Endothelial cell of umbilical vein (primary cell): ENCODE measurements at regions of chr6 and their contacts with region 1.

Region 1: DNA sequence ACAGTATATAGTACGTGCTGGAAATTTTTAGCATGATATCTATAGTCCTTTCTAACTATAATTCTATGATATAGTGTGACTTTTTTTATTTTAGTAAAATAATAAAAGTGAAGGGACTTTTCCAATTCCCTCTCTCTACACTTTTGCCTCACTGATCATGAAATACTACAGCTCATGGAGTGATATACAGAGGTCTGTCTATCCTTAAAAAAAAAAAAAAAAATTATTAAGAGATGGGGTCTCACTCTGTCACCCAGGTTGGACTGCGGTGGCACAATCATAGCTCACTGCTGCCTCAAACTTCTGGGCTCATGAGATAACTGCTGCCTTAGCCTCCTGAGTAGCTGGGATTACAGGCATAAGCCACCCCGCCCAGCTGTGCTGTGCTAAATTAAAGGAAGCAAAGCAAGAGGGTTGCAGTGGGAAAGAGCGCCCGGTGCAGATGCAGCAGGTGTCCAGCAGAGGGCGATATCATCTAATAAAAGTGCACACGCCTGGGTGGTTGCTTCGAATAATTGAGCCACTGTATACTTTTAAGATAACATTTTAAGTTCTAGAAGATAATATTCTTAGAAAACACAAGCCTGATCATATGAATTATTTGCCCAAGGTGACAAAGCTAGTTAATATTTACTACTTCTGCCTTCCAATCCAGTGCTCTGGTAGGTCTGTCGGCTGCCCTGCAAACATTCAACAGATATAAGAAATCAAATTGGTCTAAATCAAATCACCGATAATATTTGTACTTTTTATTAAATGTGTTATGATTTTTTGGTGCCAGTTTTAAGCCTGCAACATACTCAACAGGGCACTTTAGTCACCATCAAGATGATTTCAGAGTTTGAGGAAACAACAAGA is 94.9 kb upstream of the NT5E start:
- DNase-seq: peak; percentile 78
- H3K4me3 ChIP-seq: no peak overlapping the region
- H3K27ac ChIP-seq: no peak overlapping the region
- H3K4me1 ChIP-seq: no peaks in the 10 kb centered on the region
- H3K27me3 ChIP-seq: no peaks in the 10 kb centered on the region
- CTCF ChIP-seq: peak; percentile 80 to 92
- POLR2A ChIP-seq: no peak

Region 2: DNA sequence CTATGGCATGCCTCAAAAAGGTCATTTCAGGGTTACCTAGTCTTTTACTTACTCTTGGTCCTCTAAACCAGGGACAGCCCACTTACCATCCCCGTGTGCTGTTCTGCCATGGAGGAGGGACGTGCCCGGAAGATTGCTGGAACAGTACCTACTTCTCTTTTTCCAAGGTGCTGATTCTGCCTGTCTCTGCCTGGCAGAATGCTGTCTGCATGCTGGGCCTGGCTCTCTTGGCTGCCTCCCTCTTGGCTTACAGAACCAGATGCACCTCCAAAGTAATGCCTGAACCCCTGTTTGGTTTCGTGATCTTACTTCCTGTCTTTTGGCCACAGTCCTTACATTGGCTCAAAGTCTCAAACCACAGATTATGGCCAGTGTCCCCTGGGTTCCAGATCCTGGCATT is 25.8 kb before region 1 on chr6:
- CTCF ChIA-PET with region 1: no interaction called
- POLR2A ChIA-PET with region 1: no interaction called
- dilution Hi-C with region 1: no loop called
- intact Hi-C with region 1: no loop called
- DNase-seq: no peak
- H3K4me3 ChIP-seq: no peak overlapping the region
- H3K27ac ChIP-seq: no peak overlapping the region
- H3K4me1 ChIP-seq: no peaks in the 10 kb centered on the region
- H3K27me3 ChIP-seq: peaks cover 4 to 11% of the 10 kb centered on the region in 2 experiments
- CTCF ChIP-seq: no peak
- POLR2A ChIP-seq: no peak

Region 3: DNA sequence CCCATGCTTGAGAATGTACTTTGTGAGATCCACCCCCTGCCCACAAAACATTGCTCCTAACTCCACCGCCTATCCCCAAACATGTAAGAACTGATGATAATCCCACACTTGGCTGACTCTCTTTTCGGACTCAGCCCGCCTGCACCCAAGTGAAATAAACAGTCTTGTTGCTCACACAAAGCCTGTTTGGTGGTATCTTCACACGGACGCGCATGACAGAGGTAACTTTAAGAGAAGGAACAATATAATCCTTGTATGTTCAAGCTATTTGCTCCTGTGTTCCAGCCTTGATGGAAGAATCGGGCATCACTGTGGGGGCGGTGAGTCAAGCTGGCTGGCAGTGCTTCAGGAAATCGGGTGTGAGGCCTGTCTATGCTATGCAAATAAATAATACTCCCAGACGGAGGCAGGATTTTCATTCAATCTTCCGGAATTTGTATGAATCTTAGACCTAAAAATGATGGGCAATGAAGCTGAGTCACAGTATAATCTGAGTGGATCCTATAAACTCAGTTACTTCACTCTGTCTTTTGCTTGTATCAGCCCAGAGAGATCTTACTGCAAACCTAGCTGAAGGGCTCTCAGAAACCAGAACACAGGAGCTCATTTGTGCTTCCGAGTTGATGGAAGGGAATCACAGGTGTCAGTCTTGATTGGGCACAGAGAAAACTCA is 49.6 kb after region 1 on chr6:
- CTCF ChIA-PET with region 1: interaction called, 7 read pairs
- POLR2A ChIA-PET with region 1: no interaction called
- dilution Hi-C with region 1: no loop called
- intact Hi-C with region 1: loop called (anchors 1 kb)
- DNase-seq: peak; percentile 93
- H3K4me3 ChIP-seq: peak overlapping the region in 1 of 3 experiments; percentile 14
- H3K27ac ChIP-seq: peak overlapping the region; percentile 94
- H3K4me1 ChIP-seq: peaks cover 55% of the 10 kb centered on the region
- H3K27me3 ChIP-seq: no peaks in the 10 kb centered on the region
- CTCF ChIP-seq: no peak
- POLR2A ChIP-seq: peak; percentile 43

Region 4: DNA sequence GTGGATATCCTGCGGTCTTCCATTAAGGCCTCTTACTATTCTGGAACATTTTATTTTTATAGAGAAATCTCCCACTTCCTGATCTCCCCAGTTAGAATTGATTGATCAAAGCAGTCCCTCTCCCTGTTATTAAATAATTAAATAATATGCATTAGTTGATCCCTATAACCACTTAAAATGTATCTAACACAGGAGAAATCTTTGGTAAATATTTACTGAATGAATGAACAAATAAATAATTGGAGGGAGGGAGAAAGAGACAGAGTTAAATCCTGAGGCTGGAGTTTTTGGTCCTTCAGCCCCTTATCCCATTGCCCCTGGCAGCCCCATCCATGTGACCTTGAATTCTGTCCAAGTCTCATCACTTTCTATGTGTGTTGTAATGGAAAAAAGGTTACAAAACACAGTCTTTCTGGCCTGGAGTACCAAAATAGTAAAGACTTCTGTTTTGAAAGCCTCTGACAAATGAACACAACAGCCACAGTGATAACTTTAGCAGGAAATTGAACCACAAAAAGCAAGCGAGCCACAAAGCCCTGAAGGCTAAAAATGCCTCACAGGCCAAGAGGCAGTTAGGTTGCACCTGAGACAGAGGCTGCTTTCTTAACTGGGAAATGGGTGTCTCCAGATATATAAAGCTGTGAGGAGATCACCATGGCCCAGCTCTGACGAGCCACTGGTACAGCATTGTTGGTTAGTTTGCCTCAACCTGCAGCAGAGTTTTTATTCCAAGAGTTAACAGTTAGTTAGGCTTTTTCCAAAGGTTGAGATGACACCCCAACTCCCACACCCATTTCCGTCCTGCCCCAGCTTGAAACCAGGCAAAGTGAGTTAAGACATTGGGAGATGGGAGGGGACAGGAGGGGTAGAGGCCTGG is 106.2 kb after region 1 on chr6:
- CTCF ChIA-PET with region 1: interaction called, 12 read pairs
- POLR2A ChIA-PET with region 1: no interaction called
- dilution Hi-C with region 1: loop called (anchors 25 kb)
- intact Hi-C with region 1: loop called (anchors 1 kb)
- DNase-seq: peak; percentile 61
- H3K4me3 ChIP-seq: peak overlapping the region in 1 of 3 experiments; percentile 8
- H3K27ac ChIP-seq: peak overlapping the region; percentile 100
- H3K4me1 ChIP-seq: peaks cover 90% of the 10 kb centered on the region
- H3K27me3 ChIP-seq: no peaks in the 10 kb centered on the region
- CTCF ChIP-seq: no peak
- POLR2A ChIP-seq: no peak

Region 5: DNA sequence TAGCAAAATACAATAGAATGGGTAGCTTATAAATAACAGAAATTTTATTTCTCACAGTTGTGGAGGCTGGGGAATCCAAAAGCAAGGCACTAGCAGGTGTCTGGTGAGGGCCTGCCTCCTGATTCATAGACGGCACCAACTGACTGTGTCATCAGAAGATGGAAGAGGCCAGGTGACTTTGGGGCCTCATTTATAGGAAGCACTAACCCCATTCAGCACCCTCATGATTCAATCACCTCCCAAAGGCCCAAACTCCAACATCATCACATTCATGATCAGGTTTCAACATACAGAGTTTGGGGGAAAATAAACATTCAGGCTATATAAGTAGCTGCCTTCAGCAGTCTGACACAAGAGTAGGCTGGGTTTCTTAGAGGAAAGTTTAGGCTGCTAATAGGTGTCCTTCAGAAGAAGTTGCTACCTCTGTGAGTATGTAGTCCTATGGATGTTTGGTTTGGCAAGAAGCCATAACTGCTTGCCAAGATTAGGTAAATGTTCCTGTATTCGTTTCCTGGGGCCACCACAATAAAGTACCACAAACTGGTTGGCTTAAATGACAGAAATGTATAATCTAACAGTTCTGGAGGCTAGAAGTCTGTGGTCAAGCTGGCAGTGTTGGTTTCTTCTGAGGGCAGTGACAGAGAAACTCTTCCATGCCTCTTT is 143.7 kb after region 1 on chr6:
- CTCF ChIA-PET with region 1: interaction called, 12 read pairs
- POLR2A ChIA-PET with region 1: no interaction called
- dilution Hi-C with region 1: no loop called
- intact Hi-C with region 1: no loop called
- DNase-seq: peak; percentile 43
- H3K4me3 ChIP-seq: no peak overlapping the region
- H3K27ac ChIP-seq: no peak overlapping the region
- H3K4me1 ChIP-seq: peaks cover 7% of the 10 kb centered on the region
- H3K27me3 ChIP-seq: no peaks in the 10 kb centered on the region
- CTCF ChIP-seq: no peak
- POLR2A ChIP-seq: no peak

Region 6: DNA sequence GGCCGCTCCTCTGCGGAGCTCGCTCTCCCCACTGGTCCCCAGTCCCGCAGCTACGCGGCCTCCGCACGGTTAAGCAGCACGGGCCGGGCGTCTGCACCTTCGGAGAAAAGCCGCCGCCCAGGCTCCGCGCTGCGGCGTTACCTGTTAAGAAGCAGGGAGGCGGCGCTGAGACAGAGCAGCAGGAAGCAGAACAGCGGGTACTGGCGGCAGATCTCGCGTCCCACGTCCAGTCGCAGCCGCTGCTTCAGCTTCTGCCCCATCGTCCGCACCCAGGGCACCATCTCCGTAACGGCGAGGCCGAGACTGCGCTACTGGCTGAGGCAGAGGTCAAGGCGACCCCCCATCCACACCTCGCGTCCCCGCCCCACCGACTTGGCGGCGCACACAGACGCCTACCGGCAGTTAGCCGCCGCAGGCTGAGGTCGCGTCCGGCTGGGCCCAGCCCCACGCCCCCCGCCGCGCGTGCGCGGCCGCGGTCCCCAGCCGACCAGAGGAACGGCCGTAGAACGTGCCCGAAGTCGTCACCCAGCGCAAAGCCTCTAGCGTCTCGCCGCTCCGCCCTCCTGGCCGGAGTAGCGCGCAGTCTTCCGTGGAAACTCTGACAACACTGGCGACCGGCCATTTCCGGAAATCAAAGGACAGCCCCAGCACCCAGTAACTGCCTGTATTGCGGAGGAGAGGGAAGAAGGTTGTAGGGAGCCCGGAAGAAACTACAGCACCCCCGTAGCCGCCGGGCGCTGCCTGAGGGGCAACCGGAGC is 238.6 kb after region 1 on chr6 and contains the start of gene SNX14:
- CTCF ChIA-PET with region 1: no interaction called
- POLR2A ChIA-PET with region 1: no interaction called
- dilution Hi-C with region 1: no loop called
- intact Hi-C with region 1: loop called (anchors 5 kb)
- DNase-seq: peak; percentile 97
- H3K4me3 ChIP-seq: peak within 1 kb of the TSS; percentile 80 to 96 (median 92)
- H3K27ac ChIP-seq: peak within 1 kb of the TSS; percentile 82
- H3K4me1 ChIP-seq: peaks cover 16% of the 10 kb centered on the region
- H3K27me3 ChIP-seq: no peaks in the 10 kb centered on the region
- CTCF ChIP-seq: peak in 1 of 2 donors; percentile 2
- POLR2A ChIP-seq: peak; percentile 61
- total RNA-seq, gene SNX14: 64.9 and 74.3 TPM in 2 replicates

Region 7: GRCh38 chr6:85866370-85866730 is 511.4 kb after region 1 on chr6:
- CTCF ChIA-PET with region 1: no interaction called
- POLR2A ChIA-PET with region 1: no interaction called
- dilution Hi-C with region 1: no loop called
- intact Hi-C with region 1: no loop called
- DNase-seq: no peak
- H3K4me3 ChIP-seq: peak overlapping the region in 2 of 3 experiments; percentile 33 to 73
- H3K27ac ChIP-seq: peak overlapping the region; percentile 83
- H3K4me1 ChIP-seq: peaks cover 23% of the 10 kb centered on the region
- H3K27me3 ChIP-seq: no peaks in the 10 kb centered on the region
- CTCF ChIP-seq: no peak
- POLR2A ChIP-seq: no peak